ENCODE measurements at regions of chr4 and their contacts with region 1.

Region 1: GRCh38 chr4:151408630-151409469 is at the start of gene FHIP1A:
- DNase-seq: peak; percentile 87 to 97
- H3K4me3 ChIP-seq: peak within 1 kb of the TSS; percentile 75
- H3K27ac ChIP-seq: peak within 1 kb of the TSS; percentile 88
- H3K4me1 ChIP-seq: peaks cover 25% of the 10 kb centered on the region
- H3K27me3 ChIP-seq: no peaks in the 10 kb centered on the region
- CTCF ChIP-seq: no peak
- total RNA-seq, gene FHIP1A: 33.7 and 35.5 TPM in 2 replicates

Region 2: DNA sequence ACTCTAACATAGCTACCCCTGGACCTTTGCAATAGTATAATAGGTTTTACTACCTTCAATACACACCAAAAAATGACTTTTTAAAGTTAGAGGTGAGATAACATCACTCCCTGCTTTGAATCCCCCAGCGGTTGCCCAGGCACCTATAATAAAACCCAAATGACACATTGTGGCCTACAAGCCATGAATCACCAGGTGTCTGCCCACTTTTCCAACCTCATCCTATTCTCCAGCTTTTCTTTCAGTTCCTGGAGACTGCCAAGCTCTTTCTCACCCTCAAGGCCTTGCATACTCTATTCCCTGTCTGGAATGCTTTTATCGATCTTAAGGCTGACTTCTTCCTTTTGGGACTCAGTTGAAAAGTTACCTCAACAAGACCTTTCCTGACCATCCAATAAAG is 148.3 kb before region 1 on chr4:
- CTCF ChIA-PET with region 1: no interaction called
- POLR2A ChIA-PET with region 1: no interaction called
- intact Hi-C with region 1: no loop called
- DNase-seq: no peak
- H3K4me3 ChIP-seq: no peak overlapping the region
- H3K27ac ChIP-seq: no peak overlapping the region
- H3K4me1 ChIP-seq: no peaks in the 10 kb centered on the region
- H3K27me3 ChIP-seq: no peaks in the 10 kb centered on the region
- CTCF ChIP-seq: no peak

Region 3: DNA sequence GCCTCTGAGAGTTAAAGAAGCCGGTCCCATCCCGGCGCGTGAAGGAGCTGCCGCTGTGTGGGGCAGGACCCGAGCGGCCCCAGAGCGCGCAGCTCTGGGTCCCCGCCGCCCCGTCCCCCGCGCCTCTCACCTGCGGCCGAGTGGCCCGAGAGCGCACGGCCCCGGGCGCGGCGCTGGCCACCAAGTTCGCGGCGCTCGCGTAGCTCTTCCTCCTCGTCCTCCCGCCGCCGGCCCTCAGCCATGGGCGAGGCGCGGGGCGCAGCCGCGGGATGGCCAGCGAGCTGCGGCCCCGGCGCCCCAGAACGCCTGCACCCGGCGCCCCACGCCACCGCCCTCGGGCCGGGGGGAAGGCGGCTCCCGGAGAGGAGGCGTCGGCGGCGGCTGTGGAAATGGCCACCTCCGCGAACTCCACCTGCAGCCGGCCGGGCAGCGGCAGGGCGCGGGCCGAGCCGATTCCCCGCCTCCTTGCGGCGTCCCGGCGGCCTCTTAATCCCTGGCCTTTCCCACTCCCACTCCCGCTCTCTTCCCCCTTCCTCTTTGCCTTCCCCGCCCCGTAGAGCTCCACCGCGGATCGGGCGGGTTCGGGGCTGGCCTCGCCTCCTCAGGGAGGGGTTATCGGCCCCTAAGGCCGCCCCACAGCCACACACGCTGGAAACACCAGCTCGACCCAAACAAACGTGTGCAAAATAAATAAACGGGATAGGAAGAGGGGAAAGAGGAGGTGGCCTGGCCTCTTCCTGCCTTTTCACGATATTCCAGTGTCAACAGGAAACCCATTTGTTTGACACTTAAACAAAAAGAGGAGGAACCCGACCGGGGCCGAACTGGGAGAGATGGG is 83.5 kb before region 1 on chr4 and contains the start of gene SH3D19:
- CTCF ChIA-PET with region 1: no interaction called
- POLR2A ChIA-PET with region 1: no interaction called
- intact Hi-C with region 1: loop called (anchors 1 kb)
- DNase-seq: peak; percentile 56 to 82
- H3K4me3 ChIP-seq: peak within 1 kb of the TSS; percentile 67
- H3K27ac ChIP-seq: peak within 1 kb of the TSS; percentile 93
- H3K4me1 ChIP-seq: peaks cover 39% of the 10 kb centered on the region
- H3K27me3 ChIP-seq: no peaks in the 10 kb centered on the region
- CTCF ChIP-seq: no peak
- total RNA-seq, gene SH3D19: 40.0 and 41.7 TPM in 2 replicates

Region 4: DNA sequence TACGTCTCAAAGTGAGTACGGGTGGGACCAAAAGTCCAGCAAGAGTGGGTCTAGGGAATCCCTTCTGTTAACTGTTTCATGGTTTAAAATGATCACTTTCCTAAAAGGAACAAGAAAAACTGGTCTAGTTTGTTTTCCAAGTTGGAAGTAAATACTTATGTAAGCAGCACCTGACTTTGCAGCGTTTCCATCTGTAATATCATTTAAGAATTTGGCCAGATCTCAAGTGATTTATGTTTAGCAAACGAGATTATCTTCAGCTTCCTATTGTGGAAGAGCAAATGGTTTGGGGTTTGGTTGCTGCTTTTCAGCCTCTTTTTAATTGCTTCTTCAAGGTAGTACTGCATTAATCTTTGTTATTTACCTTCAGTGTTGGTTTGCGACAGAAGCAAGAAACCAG is 50.5 kb after region 1 on chr4:
- CTCF ChIA-PET with region 1: no interaction called
- POLR2A ChIA-PET with region 1: interaction called, 3 read pairs
- intact Hi-C with region 1: loop called (anchors 2 kb)
- DNase-seq: peak in 1 of 2 experiments; percentile 61
- H3K4me3 ChIP-seq: peak overlapping the region; percentile 19; the same call in 1 of the 2 replicates
- H3K27ac ChIP-seq: peak overlapping the region; percentile 44
- H3K4me1 ChIP-seq: peaks cover 20% of the 10 kb centered on the region
- H3K27me3 ChIP-seq: no peaks in the 10 kb centered on the region
- CTCF ChIP-seq: no peak

Region 5: GRCh38 chr4:151484396-151485102 is 75.7 kb after region 1 on chr4:
- CTCF ChIA-PET with region 1: interaction called, 5 read pairs
- POLR2A ChIA-PET with region 1: interaction called, 26 read pairs
- intact Hi-C with region 1: loop called (anchors 1 kb)
- DNase-seq: peak; percentile 57 to 76
- H3K4me3 ChIP-seq: no peak overlapping the region
- H3K27ac ChIP-seq: peak overlapping the region; percentile 54
- H3K4me1 ChIP-seq: peaks cover 27% of the 10 kb centered on the region
- H3K27me3 ChIP-seq: no peaks in the 10 kb centered on the region
- CTCF ChIP-seq: no peak

Region 6: GRCh38 chr4:151540728-151541422 is 132.0 kb after region 1 on chr4:
- CTCF ChIA-PET with region 1: no interaction called
- POLR2A ChIA-PET with region 1: no interaction called
- intact Hi-C with region 1: loop called (anchors 1 kb)
- DNase-seq: peak; percentile 68 to 92
- H3K4me3 ChIP-seq: no peak overlapping the region
- H3K27ac ChIP-seq: peak overlapping the region; percentile 50
- H3K4me1 ChIP-seq: peaks cover 23% of the 10 kb centered on the region
- H3K27me3 ChIP-seq: no peaks in the 10 kb centered on the region
- CTCF ChIP-seq: no peak

Region 7: DNA sequence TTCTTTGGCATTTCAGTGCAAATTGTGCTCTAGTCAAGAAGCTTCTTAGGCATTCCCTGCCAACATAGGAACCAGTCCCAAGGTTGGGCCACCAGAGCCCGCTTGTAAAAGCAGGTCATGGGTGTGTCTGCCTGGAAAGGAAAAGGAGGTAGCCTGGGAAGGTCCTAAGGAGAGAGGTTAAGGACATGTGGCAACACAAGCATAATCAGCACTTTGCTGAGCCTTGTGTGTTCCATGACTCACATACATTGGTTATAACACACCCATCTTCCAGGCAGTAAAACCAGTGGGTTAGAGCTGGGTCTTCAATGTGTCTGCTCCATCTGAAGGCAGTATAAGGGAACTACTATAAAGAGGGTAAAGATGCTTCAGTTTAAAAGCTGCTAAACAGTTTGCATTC is 165.1 kb after region 1 on chr4:
- CTCF ChIA-PET with region 1: no interaction called
- POLR2A ChIA-PET with region 1: no interaction called
- intact Hi-C with region 1: no loop called
- DNase-seq: no peak
- H3K4me3 ChIP-seq: no peak overlapping the region
- H3K27ac ChIP-seq: no peak overlapping the region
- H3K4me1 ChIP-seq: no peaks in the 10 kb centered on the region
- H3K27me3 ChIP-seq: no peaks in the 10 kb centered on the region
- CTCF ChIP-seq: no peak

Region 8: GRCh38 chr4:151604238-151604637 is 195.4 kb after region 1 on chr4:
- CTCF ChIA-PET with region 1: no interaction called
- POLR2A ChIA-PET with region 1: interaction called, 4 read pairs
- intact Hi-C with region 1: loop called (anchors 2 kb)
- DNase-seq: peak in 1 of 2 experiments; percentile 2
- H3K4me3 ChIP-seq: no peak overlapping the region
- H3K27ac ChIP-seq: no peak overlapping the region
- H3K4me1 ChIP-seq: no peaks in the 10 kb centered on the region
- H3K27me3 ChIP-seq: no peaks in the 10 kb centered on the region
- CTCF ChIP-seq: peak; percentile 69

Region 9: GRCh38 chr4:152535903-152536544 is 1127.2 kb after region 1 on chr4 and contains the start of gene FBXW7:
- CTCF ChIA-PET with region 1: no interaction called
- POLR2A ChIA-PET with region 1: interaction called, 13 read pairs
- intact Hi-C with region 1: no loop called
- DNase-seq: peak; percentile 91 to 99
- H3K4me3 ChIP-seq: peak within 1 kb of the TSS; percentile 94
- H3K27ac ChIP-seq: peak within 1 kb of the TSS; percentile 86
- H3K4me1 ChIP-seq: peaks cover 23% of the 10 kb centered on the region
- H3K27me3 ChIP-seq: no peaks in the 10 kb centered on the region
- CTCF ChIP-seq: no peak
- total RNA-seq, gene FBXW7: 28.0 and 30.2 TPM in 2 replicates